ENCODE measurements at regions of chr5 and their contacts with region 1.

Region 1: GRCh38 chr5:126794157-126794828 is 17.4 kb downstream of the LMNB1 start:
- DNase-seq: no peak
- H3K27ac ChIP-seq: no peak overlapping the region
- CTCF ChIP-seq: no peak

Region 2: DNA sequence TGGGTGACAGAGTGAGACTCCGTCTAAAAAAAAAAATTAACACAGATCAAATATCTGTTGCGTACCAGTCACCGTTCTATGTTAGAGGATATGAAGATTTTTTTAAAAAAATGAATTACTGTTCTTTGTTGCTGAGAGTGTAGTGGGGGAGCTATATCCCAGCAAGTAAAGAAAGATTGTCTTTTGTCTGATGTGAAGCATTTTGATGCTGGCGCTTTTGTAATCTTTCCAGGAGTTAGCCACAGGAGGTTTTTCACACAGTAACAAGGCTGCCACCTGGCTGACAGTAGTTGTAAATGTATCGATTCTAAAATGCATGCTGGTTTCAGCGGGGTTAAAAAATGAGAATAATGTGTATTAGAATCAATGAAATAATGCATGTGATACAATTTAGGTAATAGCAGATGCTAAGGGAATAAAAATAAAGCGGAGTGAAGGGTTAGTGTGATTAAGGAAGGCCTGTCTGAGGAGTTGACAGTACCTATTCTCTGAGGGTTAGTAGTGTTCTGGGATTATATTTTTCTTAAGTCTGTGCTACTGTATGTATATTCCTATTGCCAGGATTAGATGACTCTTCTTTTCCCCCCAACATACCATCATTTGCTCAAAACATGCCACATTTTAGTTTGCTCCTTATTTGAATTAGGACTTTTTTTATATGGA is 14.0 kb before region 1 on chr5:
- CTCF ChIA-PET with region 1: interaction called, 10 read pairs
- POLR2A ChIA-PET with region 1: interaction called, 6 read pairs
- DNase-seq: peak; percentile 59
- H3K27ac ChIP-seq: peak overlapping the region; percentile 61
- CTCF ChIP-seq: peak; percentile 81

Measured in RWPE1 (cell line).